ENCODE measurements at regions of chr2 and their contacts with region 1.

Region 1: GRCh38 chr2:96305091-96305978 is at the start of gene SNRNP200:
- DNase-seq: peak; percentile 88 to 94 (median 90)
- ATAC-seq: peak; percentile 96 to 100 (median 100)
- H3K4me3 ChIP-seq: peak within 1 kb of the TSS; percentile 66 to 98 (median 82)
- H3K27ac ChIP-seq: peak within 1 kb of the TSS; percentile 64 to 94 (median 89)
- H3K4me1 ChIP-seq: peaks cover 0 to 31% (median 19%) of the 10 kb centered on the region in 12 donors
- H3K27me3 ChIP-seq: no peaks in the 10 kb centered on the region
- CTCF ChIP-seq: no peak
- POLR2A ChIP-seq: peak in 1 of 2 donors; percentile 80
- total RNA-seq, gene SNRNP200: 54.6 to 85.5 (median 66.6) TPM

Region 2: DNA sequence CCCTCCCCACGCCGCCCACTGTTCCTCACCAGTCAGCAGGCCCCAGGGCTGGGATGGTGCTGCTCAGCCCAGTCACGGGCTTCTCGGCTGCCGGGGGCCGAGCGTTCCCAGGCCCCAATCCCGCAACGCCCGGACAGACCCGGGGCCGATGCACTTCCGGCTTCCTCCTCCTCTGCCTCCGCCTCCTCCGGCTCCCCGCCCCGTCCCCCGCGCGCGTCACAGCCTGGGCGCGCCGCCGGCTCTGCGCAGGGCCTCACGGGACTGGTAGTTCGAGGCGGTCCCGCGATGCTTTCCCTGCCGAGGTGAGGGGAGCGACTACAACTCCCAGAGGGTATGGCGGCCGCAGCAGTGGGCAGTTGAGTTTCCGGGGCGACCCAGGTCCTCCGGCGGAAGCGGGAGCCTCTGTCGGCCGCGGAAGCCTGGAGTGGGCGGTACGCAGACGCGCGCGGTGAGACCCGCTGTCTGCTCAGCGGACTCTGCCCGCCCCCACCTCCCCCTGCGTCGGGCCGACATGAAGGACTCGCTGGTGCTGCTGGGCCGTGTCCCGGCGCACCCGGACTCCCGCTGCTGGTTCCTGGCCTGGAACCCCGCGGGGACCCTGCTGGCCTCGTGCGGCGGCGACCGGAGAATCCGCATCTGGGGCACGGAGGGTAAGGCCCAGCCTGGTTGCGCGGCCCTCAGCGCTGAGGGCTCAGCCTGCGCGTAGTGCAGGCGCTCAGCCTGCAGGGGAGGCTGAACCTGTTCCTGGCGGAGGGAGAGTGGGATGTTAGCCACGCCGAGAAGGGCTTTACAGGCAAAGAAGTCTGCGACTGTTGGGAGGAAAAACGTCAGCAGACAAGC is 39.3 kb before region 1 on chr2 and contains the starts of genes CIAO1 and TMEM127:
- intact Hi-C with region 1: loop called in 5 of 10 experiments (anchors 2 to 5 kb)
- DNase-seq: peak; percentile 99 to 100 (median 99)
- ATAC-seq: peak; percentile 95 to 97 (median 96)
- H3K4me3 ChIP-seq: peak within 1 kb of the TSS; percentile 72 to 100 (median 90)
- H3K27ac ChIP-seq: peak within 1 kb of the TSS; percentile 86 to 98 (median 95)
- H3K4me1 ChIP-seq: peaks cover 16 to 55% (median 49%) of the 10 kb centered on the region in 12 donors
- H3K27me3 ChIP-seq: no peaks in the 10 kb centered on the region
- CTCF ChIP-seq: peak in 7 of 12 donors; percentile 7 to 30 (median 20)
- POLR2A ChIP-seq: peak; percentile 91 to 97
- total RNA-seq, gene CIAO1: 57.7 to 109 (median 68.7) TPM
- total RNA-seq, gene TMEM127: 71.8 to 134 (median 103) TPM

Region 3: GRCh38 chr2:96344011-96344410 is 38.7 kb after region 1 on chr2:
- intact Hi-C with region 1: loop called in 1 of 10 experiments (anchors 5 kb)
- DNase-seq: no peak
- ATAC-seq: peak in 2 of 4 donors; percentile 33 to 47
- H3K4me3 ChIP-seq: no peak overlapping the region
- H3K27ac ChIP-seq: peak overlapping the region in 1 of 12 donors; percentile 73
- H3K4me1 ChIP-seq: peaks cover 0 to 20% (median 0%) of the 10 kb centered on the region in 12 donors
- H3K27me3 ChIP-seq: no peaks in the 10 kb centered on the region
- CTCF ChIP-seq: no peak
- POLR2A ChIP-seq: no peak

Region 4: GRCh38 chr2:96353032-96353561 is 47.8 kb after region 1 on chr2:
- intact Hi-C with region 1: loop called in 2 of 10 experiments (anchors 5 kb)
- DNase-seq: peak; percentile 69 to 87 (median 80)
- ATAC-seq: peak; percentile 16 to 66 (median 48)
- H3K4me3 ChIP-seq: peak overlapping the region in 1 of 12 donors; percentile 28
- H3K27ac ChIP-seq: peak overlapping the region in 11 of 12 donors; percentile 39 to 89 (median 67)
- H3K4me1 ChIP-seq: peaks cover 0 to 34% (median 17%) of the 10 kb centered on the region in 12 donors
- H3K27me3 ChIP-seq: no peaks in the 10 kb centered on the region
- CTCF ChIP-seq: no peak
- POLR2A ChIP-seq: no peak

Region 5: GRCh38 chr2:96407041-96407918 is 101.9 kb after region 1 on chr2:
- intact Hi-C with region 1: loop called in 2 of 10 experiments (anchors 10 kb)
- DNase-seq: peak; percentile 62 to 73 (median 65)
- ATAC-seq: peak; percentile 42 to 68 (median 54)
- H3K4me3 ChIP-seq: no peak overlapping the region
- H3K27ac ChIP-seq: peak overlapping the region in 7 of 12 donors; percentile 1 to 77 (median 68)
- H3K4me1 ChIP-seq: peaks cover 0 to 38% (median 23%) of the 10 kb centered on the region in 12 donors
- H3K27me3 ChIP-seq: no peaks in the 10 kb centered on the region
- CTCF ChIP-seq: peak; percentile 71 to 89 (median 81)
- POLR2A ChIP-seq: no peak

Measured in heart left ventricle (tissue), 16 donors.